ENCODE measurements at regions of chr17 and their contacts with region 1.

Region 1: DNA sequence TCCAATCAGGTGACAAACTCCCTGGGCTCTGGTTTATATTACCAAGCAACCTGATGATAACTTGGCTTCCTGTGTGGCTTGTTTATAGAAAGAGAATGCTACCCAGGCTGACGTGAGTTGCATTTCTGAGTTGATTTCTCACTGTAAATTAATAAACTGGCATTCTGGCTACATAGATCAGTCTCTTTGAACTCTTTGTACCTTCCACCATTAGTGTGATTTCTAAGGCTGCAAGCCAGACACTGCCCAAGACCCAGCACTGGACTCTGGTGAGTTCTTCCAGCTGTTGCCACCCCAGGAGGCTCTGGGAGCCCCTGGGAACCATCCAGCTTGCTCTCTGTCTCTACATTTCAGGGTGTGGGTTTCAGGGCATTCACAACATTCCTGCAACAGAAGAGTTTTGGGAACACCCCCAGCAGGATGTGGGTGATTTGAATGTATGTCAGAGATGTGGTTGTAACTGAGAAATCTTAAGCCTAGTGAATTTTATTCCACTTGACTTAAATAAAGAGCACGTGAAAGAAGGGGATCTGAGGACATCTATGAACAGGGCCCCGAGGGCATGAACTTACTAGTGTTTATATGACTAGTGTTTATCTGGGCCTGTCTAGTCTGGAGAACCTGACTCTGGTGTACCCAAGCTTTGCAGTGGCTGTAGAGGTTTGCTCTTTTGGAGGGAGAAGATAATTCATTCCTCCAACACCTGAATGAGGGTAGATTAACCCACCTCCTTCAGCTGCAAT is 30.3 kb upstream of the LRRC37A start:
- DNase-seq: no peak
- H3K4me3 ChIP-seq: no peak overlapping the region
- H3K27ac ChIP-seq: no peak overlapping the region
- H3K4me1 ChIP-seq: peaks cover 24% of the 10 kb centered on the region
- CTCF ChIP-seq: no peak

Region 2: GRCh38 chr17:45584092-45585036 is 680.3 kb before region 1 on chr17:
- CTCF ChIA-PET with region 1: no interaction called
- POLR2A ChIA-PET with region 1: no interaction called
- intact Hi-C with region 1: loop called (anchors 5 kb)
- DNase-seq: peak; percentile 90
- H3K4me3 ChIP-seq: peak overlapping the region; percentile 79
- H3K27ac ChIP-seq: peak overlapping the region; percentile 84
- H3K4me1 ChIP-seq: peaks cover 5% of the 10 kb centered on the region
- CTCF ChIP-seq: no peak

Region 3: GRCh38 chr17:46121841-46122485 is 142.7 kb before region 1 on chr17:
- CTCF ChIA-PET with region 1: no interaction called
- POLR2A ChIA-PET with region 1: no interaction called
- intact Hi-C with region 1: no loop called
- DNase-seq: no peak
- H3K4me3 ChIP-seq: no peak overlapping the region
- H3K27ac ChIP-seq: no peak overlapping the region
- H3K4me1 ChIP-seq: peaks cover 22% of the 10 kb centered on the region
- CTCF ChIP-seq: no peak

Measured in OCI-LY7 (cell line).